ENCODE measurements at regions of chr3 and their contacts with region 1.

Region 1: GRCh38 chr3:29494305-29495036 is 213.6 kb downstream of the RBMS3 start:
- DNase-seq: peak in 1 of 2 donors; percentile 20
- H3K4me3 ChIP-seq: no peak overlapping the region
- CTCF ChIP-seq: no peak
- POLR2A ChIP-seq: no peak

Region 2: DNA sequence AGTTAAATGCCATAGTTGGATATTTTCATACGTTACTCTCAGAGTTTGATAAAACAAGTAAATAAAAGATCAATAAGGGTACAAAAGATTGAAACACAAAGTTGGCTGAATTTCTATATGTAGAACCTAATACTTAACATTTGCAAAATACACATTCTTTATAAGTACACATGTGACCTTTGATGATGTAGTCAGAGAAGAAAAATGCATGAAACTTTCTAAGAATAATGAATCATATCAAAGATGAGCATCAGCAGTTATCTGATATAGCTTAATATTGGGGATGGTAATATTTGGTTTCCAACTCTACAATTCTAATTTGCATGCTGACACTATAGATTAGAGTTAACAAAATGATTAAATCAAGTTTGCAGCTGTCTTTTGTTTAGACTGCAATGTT is 924.0 kb after region 1 on chr3:
- intact Hi-C with region 1: loop called (anchors 10 kb)
- DNase-seq: no peak
- H3K4me3 ChIP-seq: no peak overlapping the region
- CTCF ChIP-seq: no peak
- POLR2A ChIP-seq: no peak

Measured in lower leg skin (tissue), 4 donors.